T-cell (primary cell): ENCODE measurements at regions of chr1 and their contacts with region 1.

Region 1: GRCh38 chr1:53238197-53239155 is at the start of gene MAGOH:
- DNase-seq: peak; percentile 87 to 98 (median 93)
- ATAC-seq: peak; percentile 95 to 99 (median 98)
- H3K4me3 ChIP-seq: peak within 1 kb of the TSS; percentile 95 to 100
- H3K4me3 Mint-ChIP-seq: peak within 1 kb of the TSS; percentile 95 to 99 (median 98)
- H3K27ac ChIP-seq: peak within 1 kb of the TSS; percentile 82
- H3K27ac Mint-ChIP-seq: peak within 1 kb of the TSS; percentile 89 to 93
- H3K4me1 ChIP-seq: peaks cover 9 to 29% of the 10 kb centered on the region in 2 experiments
- H3K4me1 Mint-ChIP-seq: peaks cover 34 to 36% (median 34%) of the 10 kb centered on the region in 3 donors
- H3K27me3 ChIP-seq: no peaks in the 10 kb centered on the region
- H3K27me3 Mint-ChIP-seq: no peaks in the 10 kb centered on the region
- total RNA-seq, gene MAGOH: 43.7 to 51.9 (median 51.3) TPM

Region 2: GRCh38 chr1:53266106-53266505 is 27.6 kb after region 1 on chr1:
- CTCF ChIA-PET with region 1: no interaction called
- POLR2A ChIA-PET with region 1: interaction called in 1 of 2 experiments, 14 read pairs
- DNase-seq: no peak
- ATAC-seq: no peak
- H3K4me3 ChIP-seq: no peak overlapping the region
- H3K4me3 Mint-ChIP-seq: no peak overlapping the region
- H3K27ac ChIP-seq: no peak overlapping the region
- H3K27ac Mint-ChIP-seq: no peak overlapping the region
- H3K4me1 ChIP-seq: no peaks in the 10 kb centered on the region
- H3K4me1 Mint-ChIP-seq: no peaks in the 10 kb centered on the region
- H3K27me3 ChIP-seq: no peaks in the 10 kb centered on the region
- H3K27me3 Mint-ChIP-seq: no peaks in the 10 kb centered on the region